A549 (cell line): ENCODE measurements at regions of chr12 and their contacts with region 1.

Region 1: GRCh38 chr12:117367011-117367638 is 5.7 kb upstream of the NOS1 start:
- DNase-seq: peak; percentile 85 to 90
- ATAC-seq: peak; percentile 41 to 86; a peak in 4 of 6 replicates
- H3K4me3 ChIP-seq: no peak overlapping the region
- H3K27ac ChIP-seq: peak overlapping the region; percentile 13 to 36; a peak in 3 of 6 replicates
- H3K4me1 ChIP-seq: 0 out of 3 replicates have a peak, but pooled peaks cover 3% of the 10 kb centered on the region
- CTCF ChIP-seq: peak; percentile 96
- EP300 ChIP-seq: no peak
- POLR2A ChIP-seq: no peak
- RAD21 ChIP-seq: peak; percentile 98 to 99

Region 2: DNA sequence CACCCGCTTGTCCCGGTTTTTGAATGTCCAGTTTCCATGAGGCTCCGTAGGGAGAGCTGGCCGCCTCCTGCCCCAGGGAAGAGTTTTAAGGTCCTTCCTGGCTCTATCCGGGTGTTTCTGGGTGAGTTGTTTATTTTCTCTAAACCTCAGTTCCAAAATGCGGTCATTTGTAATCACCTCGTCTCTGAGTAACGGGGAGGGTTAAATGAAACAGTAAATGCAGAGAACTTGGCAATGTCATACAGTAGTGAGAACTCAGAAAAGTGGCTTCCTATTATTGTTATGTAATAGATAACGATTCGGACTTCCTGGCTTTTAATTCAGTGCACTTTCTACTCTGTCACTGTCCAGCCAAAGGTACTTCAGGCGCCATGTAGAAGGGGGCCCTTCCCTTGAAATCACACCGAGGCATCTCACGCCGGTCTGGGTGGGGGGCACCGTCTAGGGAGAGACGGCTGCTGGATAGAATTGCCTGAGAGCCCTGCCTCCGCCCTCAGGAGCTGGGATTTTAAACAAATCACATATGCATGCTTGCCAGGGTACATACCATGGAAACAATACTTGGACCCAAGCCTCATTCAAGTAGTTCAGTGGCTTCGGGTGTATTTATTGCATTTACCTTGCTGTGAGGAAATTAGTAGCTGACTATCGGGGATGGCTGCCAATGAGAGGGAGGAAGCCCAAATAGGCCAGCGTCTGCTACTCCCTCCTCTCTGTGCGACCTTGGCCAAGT is 32.1 kb before region 1 on chr12:
- CTCF ChIA-PET with region 1: interaction called, 13 read pairs
- POLR2A ChIA-PET with region 1: no interaction called
- DNase-seq: no peak
- ATAC-seq: no peak
- H3K4me3 ChIP-seq: no peak overlapping the region
- H3K27ac ChIP-seq: no peak overlapping the region
- H3K4me1 ChIP-seq: peaks cover 12% of the 10 kb centered on the region; the same call in 2 of the 3 replicates
- CTCF ChIP-seq: no peak
- EP300 ChIP-seq: no peak
- POLR2A ChIP-seq: no peak
- RAD21 ChIP-seq: no peak

Region 3: DNA sequence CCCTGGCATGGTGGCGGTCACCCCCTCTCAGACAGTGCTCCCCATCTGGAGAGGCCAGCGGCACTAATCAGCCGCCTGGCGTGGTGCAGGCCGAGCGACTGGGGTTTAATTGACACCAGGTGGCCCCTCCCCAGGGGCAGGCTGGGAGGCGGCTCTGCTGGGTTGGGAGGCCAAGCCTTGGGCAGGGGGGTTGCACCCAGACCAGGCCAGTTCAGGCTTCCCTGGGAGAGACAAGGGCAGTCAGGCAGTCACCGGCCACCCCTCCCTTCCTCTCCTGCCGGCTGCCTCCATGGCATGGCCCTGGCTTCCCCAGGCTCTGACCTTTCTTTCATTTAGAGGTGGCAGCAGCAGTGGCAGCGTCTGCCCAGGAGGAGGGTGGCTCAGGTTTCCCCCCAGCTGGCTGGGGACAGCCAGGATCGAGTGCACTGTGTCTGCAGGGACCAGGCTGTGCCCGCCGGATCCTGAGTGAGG is 72.4 kb after region 1 on chr12:
- CTCF ChIA-PET with region 1: interaction called, 10 read pairs
- POLR2A ChIA-PET with region 1: no interaction called
- DNase-seq: no peak
- ATAC-seq: peak in 1 of 2 experiments; percentile 9; a peak in 1 of 6 replicates
- H3K4me3 ChIP-seq: no peak overlapping the region
- H3K27ac ChIP-seq: no peak overlapping the region
- H3K4me1 ChIP-seq: peaks cover 9% of the 10 kb centered on the region; the same call in 2 of the 3 replicates
- CTCF ChIP-seq: no peak
- EP300 ChIP-seq: no peak
- POLR2A ChIP-seq: no peak
- RAD21 ChIP-seq: no peak

Region 4: GRCh38 chr12:117599849-117600248 is 232.7 kb after region 1 on chr12:
- CTCF ChIA-PET with region 1: interaction called, 315 read pairs
- POLR2A ChIA-PET with region 1: no interaction called
- DNase-seq: no peak
- ATAC-seq: no peak
- H3K4me3 ChIP-seq: no peak overlapping the region
- H3K27ac ChIP-seq: no peak overlapping the region
- H3K4me1 ChIP-seq: peaks cover 7% of the 10 kb centered on the region; the same call in 1 of the 3 replicates
- CTCF ChIP-seq: no peak
- EP300 ChIP-seq: no peak
- POLR2A ChIP-seq: no peak
- RAD21 ChIP-seq: no peak

Region 5: DNA sequence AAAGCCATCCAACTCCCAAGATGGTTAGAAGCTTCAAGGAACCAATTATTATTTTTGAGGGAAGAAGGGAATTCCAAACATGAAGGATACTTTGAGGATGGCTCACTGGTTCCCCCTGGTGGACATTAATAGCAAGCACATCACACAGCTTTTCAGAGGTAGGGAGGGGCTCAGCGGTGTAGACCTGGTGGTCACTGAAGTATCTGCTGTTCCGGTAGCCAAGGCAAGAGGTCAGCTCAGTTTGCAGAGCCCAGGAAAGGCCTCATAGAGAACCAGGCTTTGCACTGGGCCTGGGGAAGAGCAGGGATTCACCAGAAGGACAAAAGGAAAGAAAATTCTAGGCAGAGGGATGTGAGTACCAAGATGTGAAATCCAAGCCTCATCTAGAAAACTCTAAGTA is 482.9 kb after region 1 on chr12:
- CTCF ChIA-PET with region 1: interaction called, 90 read pairs
- POLR2A ChIA-PET with region 1: interaction called, 4 read pairs
- DNase-seq: peak; percentile 77 to 80
- ATAC-seq: peak; percentile 67 to 87
- H3K4me3 ChIP-seq: no peak overlapping the region
- H3K27ac ChIP-seq: peak overlapping the region; percentile 14 to 45; a peak in 3 of 6 replicates
- H3K4me1 ChIP-seq: peaks cover 12% of the 10 kb centered on the region
- CTCF ChIP-seq: peak; percentile 89
- EP300 ChIP-seq: no peak
- POLR2A ChIP-seq: no peak
- RAD21 ChIP-seq: peak; percentile 77 to 84